A673 (cell line): ENCODE measurements at regions of chr20 and their contacts with region 1.

Region 1: GRCh38 chr20:35179292-35180212 is 7.7 kb downstream of the PROCR start:
- DNase-seq: no peak
- H3K4me3 ChIP-seq: no peak overlapping the region
- H3K27ac ChIP-seq: no peak overlapping the region
- H3K4me1 ChIP-seq: no peaks in the 10 kb centered on the region
- H3K27me3 ChIP-seq: peaks cover 9% of the 10 kb centered on the region
- CTCF ChIP-seq: no peak

Region 2: GRCh38 chr20:35166242-35166830 is 13.2 kb before region 1 on chr20:
- CTCF ChIA-PET with region 1: no interaction called
- POLR2A ChIA-PET with region 1: interaction called, 21 read pairs
- intact Hi-C with region 1: no loop called
- DNase-seq: peak; percentile 39
- H3K4me3 ChIP-seq: no peak overlapping the region
- H3K27ac ChIP-seq: no peak overlapping the region
- H3K4me1 ChIP-seq: peaks cover 3% of the 10 kb centered on the region
- H3K27me3 ChIP-seq: no peaks in the 10 kb centered on the region
- CTCF ChIP-seq: no peak

Region 3: GRCh38 chr20:35238170-35238569 is 58.6 kb after region 1 on chr20:
- CTCF ChIA-PET with region 1: no interaction called
- POLR2A ChIA-PET with region 1: interaction called, 12 read pairs
- intact Hi-C with region 1: no loop called
- DNase-seq: no peak
- H3K4me3 ChIP-seq: no peak overlapping the region
- H3K27ac ChIP-seq: no peak overlapping the region
- H3K4me1 ChIP-seq: no peaks in the 10 kb centered on the region
- H3K27me3 ChIP-seq: peaks cover 5% of the 10 kb centered on the region
- CTCF ChIP-seq: no peak

Region 4: GRCh38 chr20:35680452-35681183 is 501.1 kb after region 1 on chr20:
- CTCF ChIA-PET with region 1: no interaction called
- POLR2A ChIA-PET with region 1: no interaction called
- intact Hi-C with region 1: no loop called
- DNase-seq: no peak
- H3K4me3 ChIP-seq: no peak overlapping the region
- H3K27ac ChIP-seq: no peak overlapping the region
- H3K4me1 ChIP-seq: no peaks in the 10 kb centered on the region
- H3K27me3 ChIP-seq: no peaks in the 10 kb centered on the region
- CTCF ChIP-seq: no peak